Activated CD4-positive, alpha-beta T cell treated with anti-CD3 and anti-CD28 coated beads, Interleukin-2, amount 10 ng/mL, durations not matched to agents 24 days and 14 days (primary cell): ENCODE measurements at regions of chr1 and their contacts with region 1.

Region 1: DNA sequence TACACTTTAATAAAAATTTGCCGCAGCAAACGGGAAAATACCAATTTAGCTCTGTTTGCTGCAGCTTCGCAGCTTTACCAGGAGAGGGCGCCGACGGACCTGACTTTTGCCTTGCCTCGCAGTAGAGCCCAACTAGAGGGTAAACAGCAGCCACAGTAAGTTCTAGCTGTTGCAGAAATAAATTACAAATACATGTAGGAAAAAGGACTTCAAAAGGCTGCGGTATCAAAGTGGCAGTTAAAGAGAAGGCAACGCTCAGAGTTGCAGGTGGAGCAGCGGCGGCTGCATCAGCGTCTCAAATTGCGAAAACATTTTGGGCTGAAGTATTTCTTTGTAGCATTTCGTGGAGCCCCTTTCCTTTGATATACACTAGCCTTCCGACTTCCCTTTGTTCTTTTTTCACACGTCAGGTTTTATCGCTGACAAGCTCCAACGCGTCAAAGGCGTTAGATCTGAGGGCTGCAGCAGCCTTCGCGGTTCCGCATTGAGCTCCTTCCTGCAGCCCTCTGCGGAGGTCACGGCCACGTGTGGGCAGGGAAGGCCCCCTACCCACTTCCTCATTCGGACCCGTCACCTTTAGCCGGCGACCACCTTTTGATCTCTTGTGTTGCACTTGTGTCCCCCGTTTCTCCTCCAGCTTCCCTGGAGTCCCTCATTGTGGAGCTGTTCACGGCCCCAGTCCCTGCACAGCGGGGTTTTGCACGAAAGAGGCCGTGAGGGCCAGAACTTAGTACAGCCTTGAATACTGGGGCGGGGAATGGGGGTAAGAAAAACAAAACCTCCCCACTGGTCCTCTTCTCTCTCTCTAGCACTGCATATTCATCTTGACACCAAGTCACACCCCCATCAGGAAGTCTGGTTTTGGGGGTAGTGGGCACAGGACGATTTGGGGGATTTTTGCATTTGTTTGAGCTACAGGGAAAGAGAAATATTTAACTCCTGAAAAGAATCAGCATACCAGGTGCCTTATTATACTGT is 72.8 kb downstream of the S1PR1 start:
- DNase-seq: peak; percentile 91
- H3K4me3 Mint-ChIP-seq: peak overlapping the region; percentile 79
- H3K27ac Mint-ChIP-seq: peak overlapping the region; percentile 69
- H3K4me1 Mint-ChIP-seq: peaks cover 68% of the 10 kb centered on the region
- H3K27me3 Mint-ChIP-seq: peaks cover 13% of the 10 kb centered on the region

Region 2: DNA sequence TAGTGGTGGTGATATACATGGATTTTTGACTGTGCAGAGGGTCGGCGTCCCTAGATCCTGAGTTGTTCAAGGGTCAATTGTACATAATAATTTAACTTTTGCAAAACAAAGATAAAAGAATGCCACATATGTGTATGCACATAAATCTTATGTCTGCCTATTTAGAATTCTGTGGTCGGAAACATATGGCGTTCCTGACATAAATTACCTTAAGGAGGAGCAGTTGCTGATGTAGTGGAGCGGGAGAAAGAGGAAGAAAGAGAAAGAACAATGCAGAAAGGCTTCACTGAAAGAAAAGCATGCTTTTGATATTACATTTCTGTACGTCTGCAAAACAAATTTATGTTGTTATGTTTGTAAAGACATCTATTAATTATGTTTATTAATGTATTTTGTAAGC is 32.8 kb before region 1 on chr1:
- intact Hi-C with region 1: no loop called
- DNase-seq: no peak
- H3K4me3 Mint-ChIP-seq: no peak overlapping the region
- H3K27ac Mint-ChIP-seq: no peak overlapping the region
- H3K4me1 Mint-ChIP-seq: peaks cover 42% of the 10 kb centered on the region
- H3K27me3 Mint-ChIP-seq: no peaks in the 10 kb centered on the region

Region 3: DNA sequence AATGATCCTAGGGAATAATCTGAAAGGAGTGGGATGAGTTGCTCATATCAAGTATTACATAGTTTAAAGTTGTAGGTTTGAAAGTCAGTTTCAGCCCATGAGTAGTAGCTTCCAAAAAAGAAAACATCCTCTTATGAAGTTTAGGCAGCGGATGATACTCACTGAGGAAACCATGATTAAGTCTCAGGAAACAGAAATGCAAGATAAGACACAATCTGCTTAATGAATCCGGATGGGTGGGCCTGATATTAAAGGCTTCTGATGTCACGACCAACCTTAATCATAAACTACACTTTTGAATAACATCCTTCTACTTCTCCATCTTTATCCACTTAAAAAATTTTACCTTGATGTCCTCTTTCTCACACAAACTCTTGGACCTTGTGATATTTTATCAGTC is 11.0 kb before region 1 on chr1:
- intact Hi-C with region 1: no loop called
- DNase-seq: no peak
- H3K4me3 Mint-ChIP-seq: no peak overlapping the region
- H3K27ac Mint-ChIP-seq: no peak overlapping the region
- H3K4me1 Mint-ChIP-seq: peaks cover 17% of the 10 kb centered on the region
- H3K27me3 Mint-ChIP-seq: peaks cover 37% of the 10 kb centered on the region

Region 4: GRCh38 chr1:101357444-101357986 is 47.9 kb after region 1 on chr1:
- intact Hi-C with region 1: loop called (anchors 1 kb)
- DNase-seq: peak; percentile 94
- H3K4me3 Mint-ChIP-seq: no peak overlapping the region
- H3K27ac Mint-ChIP-seq: no peak overlapping the region
- H3K4me1 Mint-ChIP-seq: peaks cover 7% of the 10 kb centered on the region
- H3K27me3 Mint-ChIP-seq: peaks cover 36% of the 10 kb centered on the region

Region 5: GRCh38 chr1:101371259-101371658 is 61.6 kb after region 1 on chr1:
- intact Hi-C with region 1: loop called (anchors 1 kb)
- DNase-seq: peak; percentile 79
- H3K4me3 Mint-ChIP-seq: peak overlapping the region; percentile 41
- H3K27ac Mint-ChIP-seq: no peak overlapping the region
- H3K4me1 Mint-ChIP-seq: peaks cover 13% of the 10 kb centered on the region
- H3K27me3 Mint-ChIP-seq: peaks cover 21% of the 10 kb centered on the region

Region 6: GRCh38 chr1:101438359-101438758 is 128.7 kb after region 1 on chr1:
- intact Hi-C with region 1: loop called (anchors 5 kb)
- DNase-seq: no peak
- H3K4me3 Mint-ChIP-seq: no peak overlapping the region
- H3K27ac Mint-ChIP-seq: no peak overlapping the region
- H3K4me1 Mint-ChIP-seq: no peaks in the 10 kb centered on the region
- H3K27me3 Mint-ChIP-seq: peaks cover 34% of the 10 kb centered on the region

Region 7: DNA sequence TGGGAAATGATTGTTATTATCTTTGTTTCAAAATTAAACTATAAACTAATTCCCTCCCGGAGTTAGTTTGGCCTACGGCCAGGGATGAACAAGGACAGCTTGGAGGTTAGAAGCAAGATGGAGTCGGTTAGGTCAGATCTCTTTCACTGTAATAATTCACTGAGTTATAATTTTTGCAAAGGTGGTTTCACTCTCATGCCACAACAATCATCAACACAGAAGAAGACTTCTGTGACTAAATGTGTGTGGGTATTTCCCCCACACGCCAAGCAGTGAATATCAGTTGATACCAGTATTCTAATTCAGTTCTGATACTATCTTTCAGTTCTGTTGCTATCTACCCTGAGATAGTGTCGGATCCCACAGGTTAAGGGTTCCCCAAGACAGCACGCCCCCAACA is 142.3 kb after region 1 on chr1:
- intact Hi-C with region 1: loop called (anchors 5 kb)
- DNase-seq: peak; percentile 55
- H3K4me3 Mint-ChIP-seq: no peak overlapping the region
- H3K27ac Mint-ChIP-seq: peak overlapping the region; percentile 23
- H3K4me1 Mint-ChIP-seq: peaks cover 29% of the 10 kb centered on the region
- H3K27me3 Mint-ChIP-seq: peaks cover 19% of the 10 kb centered on the region

Region 8: DNA sequence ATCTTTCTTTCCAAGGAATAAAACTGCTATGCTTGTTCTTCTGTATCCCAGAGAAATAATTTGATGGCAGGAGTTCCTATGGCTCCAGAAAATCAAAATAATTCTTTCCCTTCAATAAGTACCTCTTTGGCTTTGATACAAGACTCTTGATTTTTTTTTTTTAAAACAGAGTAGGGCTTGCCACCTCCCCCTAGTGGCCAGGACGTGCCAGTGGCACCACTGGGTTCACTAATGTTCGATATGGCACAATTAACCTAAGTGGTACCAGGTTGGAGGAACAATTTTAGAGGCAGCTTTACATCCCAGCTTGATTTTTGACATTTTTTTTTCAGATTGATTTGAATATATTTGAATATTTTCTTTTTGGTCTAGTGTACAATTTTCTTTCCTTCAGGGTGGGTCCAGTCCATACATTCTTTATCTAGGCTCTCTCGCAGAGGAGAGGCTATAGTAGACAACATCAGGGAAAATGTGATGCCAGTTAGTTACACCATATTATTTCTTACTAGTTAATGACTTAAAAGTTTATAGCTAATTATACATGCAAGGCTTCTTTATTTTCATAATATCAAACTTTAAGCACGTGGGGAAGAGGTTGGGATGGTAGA is 258.1 kb after region 1 on chr1:
- intact Hi-C with region 1: loop called (anchors 5 kb)
- DNase-seq: peak; percentile 81
- H3K4me3 Mint-ChIP-seq: no peak overlapping the region
- H3K27ac Mint-ChIP-seq: no peak overlapping the region
- H3K4me1 Mint-ChIP-seq: no peaks in the 10 kb centered on the region
- H3K27me3 Mint-ChIP-seq: peaks cover 24% of the 10 kb centered on the region